Activated CD8-positive, alpha-beta T cell treated with anti-CD3 and anti-CD28 coated beads, Interleukin-2, amount 10 ng/mL, durations not matched to agents 7 days and 5 days (primary cell): ENCODE measurements at regions of chr15 and their contacts with region 1.

Region 1: DNA sequence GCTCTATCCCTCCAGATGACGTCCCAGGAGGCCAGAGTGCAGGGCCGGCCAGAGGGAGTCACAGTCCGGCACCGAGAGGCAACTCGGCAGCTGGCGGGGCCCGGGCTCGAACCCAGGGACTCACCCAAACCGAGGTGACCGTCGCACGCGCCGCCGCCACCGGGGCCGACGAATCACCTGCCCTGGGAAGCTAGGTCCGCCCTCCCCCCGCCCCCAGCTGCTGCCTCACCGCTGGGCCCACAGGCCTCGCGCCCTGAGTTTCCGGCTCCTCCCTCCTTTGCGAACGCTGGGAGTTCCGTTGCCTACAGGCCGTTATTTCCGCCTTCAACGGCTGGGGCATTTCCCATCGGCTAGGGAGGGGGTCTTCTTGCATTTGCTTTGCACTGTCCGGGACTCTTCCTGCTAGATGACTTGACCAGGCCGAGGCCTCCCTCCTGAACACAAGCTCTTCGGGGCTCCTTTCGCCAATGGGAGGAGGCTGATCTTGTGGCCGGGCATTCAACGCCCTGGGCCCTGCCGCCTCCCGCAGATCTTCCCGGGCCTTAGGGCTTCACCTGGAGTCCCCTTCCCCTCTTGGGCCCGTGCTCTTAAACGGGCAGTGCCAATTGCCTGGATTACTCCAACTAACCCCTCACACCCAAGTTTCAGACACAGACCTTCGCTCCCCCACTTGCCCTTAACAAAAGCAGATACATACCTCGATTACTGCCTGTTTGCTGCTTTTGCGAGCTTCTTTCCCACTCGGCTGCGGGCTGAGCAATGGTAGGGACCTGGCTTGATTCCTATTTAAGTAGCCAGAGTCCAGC is at the start of gene SNUPN:
- DNase-seq: peak; percentile 97
- ATAC-seq: peak; percentile 89
- H3K4me3 Mint-ChIP-seq: peak within 1 kb of the TSS; percentile 97
- H3K27ac Mint-ChIP-seq: peak within 1 kb of the TSS; percentile 99
- H3K4me1 Mint-ChIP-seq: peaks cover 44% of the 10 kb centered on the region
- H3K27me3 Mint-ChIP-seq: no peaks in the 10 kb centered on the region
- total RNA-seq, gene SNUPN: 31.4 to 32.5 TPM

Region 2: DNA sequence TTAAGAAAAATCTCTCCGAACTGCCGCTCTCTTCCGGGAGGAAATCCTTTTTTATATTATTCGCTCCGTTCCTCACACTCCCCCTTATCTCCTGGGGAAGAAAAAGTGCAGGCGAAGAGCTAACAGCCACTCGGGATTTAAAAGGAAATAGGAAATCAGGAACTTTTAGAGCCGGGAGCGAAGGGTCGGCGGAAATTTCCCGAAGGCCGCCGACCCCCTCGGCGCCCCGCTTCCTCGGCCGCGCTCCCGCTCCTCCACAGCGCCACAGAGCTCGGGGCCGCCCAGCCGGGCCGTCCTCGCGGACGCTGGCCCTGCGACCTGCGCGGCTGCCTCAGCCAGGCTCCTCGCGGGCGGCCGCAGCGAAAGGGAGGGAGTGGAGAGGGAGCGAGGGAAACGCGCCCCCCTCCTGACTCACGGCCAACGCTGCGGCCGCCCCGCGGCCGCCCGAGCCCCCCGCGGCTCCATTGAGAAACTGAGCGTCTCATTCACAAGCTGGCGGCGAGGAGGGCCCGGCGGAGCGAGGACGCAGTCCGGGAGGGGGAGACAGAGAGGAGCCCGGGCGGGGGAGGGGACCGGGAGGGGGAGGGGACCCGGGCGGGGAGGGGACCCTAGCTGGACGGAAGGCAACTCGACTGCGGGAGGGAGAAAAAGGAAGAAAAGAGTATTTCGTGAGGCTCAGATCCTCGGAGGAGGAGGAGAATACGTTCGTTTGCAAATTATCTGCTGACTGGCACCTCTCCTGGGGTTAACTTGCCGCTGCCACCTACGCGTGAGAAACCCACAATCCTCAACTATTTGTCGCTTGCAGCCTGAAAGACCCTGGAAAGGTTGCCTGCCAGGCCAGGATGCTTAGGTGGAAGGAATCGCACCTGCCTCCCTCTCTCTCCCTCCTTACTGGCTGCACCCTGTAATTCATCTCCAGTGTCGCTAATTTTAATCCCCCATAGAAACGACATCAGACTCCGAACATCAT is 46.5 kb before region 1 on chr15 and contains the start of gene PTPN9:
- CTCF ChIA-PET with region 1: interaction called, 14 read pairs
- POLR2A ChIA-PET with region 1: interaction called, 13 read pairs
- DNase-seq: peak; percentile 84
- ATAC-seq: peak; percentile 83
- H3K4me3 Mint-ChIP-seq: peak within 1 kb of the TSS; percentile 92
- H3K27ac Mint-ChIP-seq: peak within 1 kb of the TSS; percentile 94
- H3K4me1 Mint-ChIP-seq: peaks cover 18% of the 10 kb centered on the region
- H3K27me3 Mint-ChIP-seq: no peaks in the 10 kb centered on the region
- total RNA-seq, gene PTPN9: 46.3 to 48.7 TPM

Region 3: GRCh38 chr15:75606711-75607699 is 18.7 kb before region 1 on chr15:
- CTCF ChIA-PET with region 1: interaction called, 6 read pairs
- POLR2A ChIA-PET with region 1: interaction called, 33 read pairs
- DNase-seq: peak; percentile 74
- ATAC-seq: peak; percentile 80
- H3K4me3 Mint-ChIP-seq: peak overlapping the region; percentile 63
- H3K27ac Mint-ChIP-seq: peak overlapping the region; percentile 96
- H3K4me1 Mint-ChIP-seq: peaks cover 50% of the 10 kb centered on the region
- H3K27me3 Mint-ChIP-seq: no peaks in the 10 kb centered on the region

Region 4: DNA sequence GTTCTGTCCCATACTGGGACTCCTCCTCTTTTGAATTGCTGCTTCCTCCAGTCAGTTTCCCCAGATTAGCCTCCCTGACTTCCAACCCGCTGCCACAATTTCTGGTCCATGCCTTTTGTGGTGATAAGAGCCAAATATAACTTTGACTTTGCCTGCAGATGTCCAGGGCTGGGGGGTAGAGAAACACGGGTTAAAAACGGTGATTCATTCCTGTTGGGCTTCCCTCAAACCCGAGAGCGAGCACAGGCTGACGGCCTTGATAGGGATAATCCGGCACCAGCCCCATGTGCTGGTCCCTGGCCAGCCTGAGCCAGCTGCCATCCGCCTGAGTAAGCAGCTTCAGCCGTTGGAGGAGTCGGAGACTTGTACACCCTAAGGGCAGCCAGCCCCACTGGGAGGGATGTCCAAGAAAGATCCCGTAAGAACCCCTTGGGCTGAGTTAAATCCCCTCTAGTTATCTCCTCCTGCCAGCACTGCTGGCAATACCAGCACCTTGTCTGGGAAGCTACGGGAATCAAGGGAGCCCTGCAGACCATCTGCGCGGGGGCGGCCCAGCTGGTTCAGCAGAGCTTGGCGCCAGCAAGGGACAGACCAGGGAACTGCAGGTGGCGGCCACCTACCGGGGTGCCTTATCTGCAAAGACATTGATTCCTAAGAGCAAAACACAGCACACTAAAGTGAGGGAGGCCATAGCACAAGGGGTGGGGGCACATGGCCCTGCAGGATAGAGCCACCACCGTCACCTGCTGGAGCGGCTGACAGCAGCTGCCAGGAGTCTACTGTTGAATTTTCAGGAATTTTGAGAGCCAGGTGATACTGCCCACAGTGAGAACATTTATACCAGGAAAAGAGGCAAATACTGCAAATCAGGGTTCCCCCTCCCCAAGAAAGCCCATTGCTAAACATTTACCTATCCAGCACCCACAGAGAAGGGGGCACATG is 68.8 kb after region 1 on chr15:
- CTCF ChIA-PET with region 1: no interaction called
- POLR2A ChIA-PET with region 1: no interaction called
- DNase-seq: no peak
- ATAC-seq: no peak
- H3K4me3 Mint-ChIP-seq: no peak overlapping the region
- H3K27ac Mint-ChIP-seq: peak overlapping the region; percentile 74
- H3K4me1 Mint-ChIP-seq: peaks cover 39% of the 10 kb centered on the region
- H3K27me3 Mint-ChIP-seq: peaks cover 6% of the 10 kb centered on the region

Region 5: DNA sequence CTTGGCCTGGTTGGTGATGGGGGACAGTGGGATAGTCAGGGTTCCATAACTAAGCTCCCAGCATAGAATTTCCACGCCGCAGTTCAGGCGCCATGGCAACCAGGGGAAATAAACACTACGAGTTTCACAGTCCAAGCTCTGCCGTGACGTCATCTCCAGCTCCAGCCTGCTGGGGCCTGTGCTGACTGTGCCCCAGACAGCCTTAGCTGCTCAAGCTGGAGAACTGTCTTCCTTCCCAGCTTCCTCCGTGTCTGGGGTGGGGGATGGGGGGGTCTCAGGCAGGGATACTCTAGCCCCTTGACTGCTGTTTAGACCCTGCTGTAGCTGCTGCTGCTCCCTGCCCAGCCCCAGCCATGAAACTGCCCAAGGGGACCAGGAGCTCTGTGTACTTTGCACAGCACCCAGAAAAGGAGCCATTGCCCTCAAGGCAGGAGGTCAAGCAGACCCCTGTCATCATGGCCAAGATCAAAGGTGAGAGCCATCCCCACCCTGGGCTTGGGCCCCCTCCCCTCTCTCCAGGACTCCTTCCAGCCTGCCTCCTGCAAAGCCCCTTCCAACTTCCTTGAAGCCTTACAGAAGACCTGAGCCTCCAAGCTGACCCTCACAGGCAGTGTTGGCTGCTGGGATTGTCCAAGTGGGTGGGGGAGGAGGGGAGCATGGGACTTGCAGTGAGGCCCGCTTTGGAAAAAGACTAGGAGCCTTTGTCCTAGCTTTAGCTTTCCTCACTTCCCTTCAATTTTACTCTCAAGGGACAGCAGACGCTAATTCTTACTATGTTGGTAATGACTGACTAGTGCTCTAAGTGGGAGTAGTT is 98.3 kb after region 1 on chr15:
- CTCF ChIA-PET with region 1: no interaction called
- POLR2A ChIA-PET with region 1: no interaction called
- DNase-seq: peak; percentile 53
- ATAC-seq: peak; percentile 73
- H3K4me3 Mint-ChIP-seq: no peak overlapping the region
- H3K27ac Mint-ChIP-seq: no peak overlapping the region
- H3K4me1 Mint-ChIP-seq: peaks cover 3% of the 10 kb centered on the region
- H3K27me3 Mint-ChIP-seq: peaks cover 5% of the 10 kb centered on the region